ENCODE measurements at regions of chr21 and their contacts with region 1.

Region 1: DNA sequence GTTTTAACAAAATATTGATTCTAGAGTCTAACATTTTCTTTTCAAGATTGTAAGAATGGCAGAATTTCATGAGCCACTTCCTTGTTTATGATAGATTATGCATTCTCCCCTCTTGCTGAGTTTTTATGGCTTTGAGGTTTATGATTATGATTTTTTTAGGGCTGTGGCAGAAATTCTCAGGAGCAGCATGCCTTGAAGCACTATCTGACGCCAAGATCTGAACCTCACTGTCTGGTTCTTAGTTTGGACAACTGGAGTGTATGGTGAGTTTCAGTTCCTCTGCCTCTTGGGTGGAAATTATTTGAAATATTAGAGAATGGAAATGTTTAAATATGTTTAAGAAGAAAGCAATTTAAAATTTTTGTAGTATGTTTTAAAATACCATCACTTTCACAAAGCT is 10.2 kb downstream of the USP16 start:
- DNase-seq: no peak
- H3K4me3 ChIP-seq: no peak overlapping the region
- H3K27ac ChIP-seq: no peak overlapping the region
- H3K4me1 ChIP-seq: no peaks in the 10 kb centered on the region
- H3K27me3 ChIP-seq: no peaks in the 10 kb centered on the region
- CTCF ChIP-seq: no peak
- POLR2A ChIP-seq: no peak

Region 2: DNA sequence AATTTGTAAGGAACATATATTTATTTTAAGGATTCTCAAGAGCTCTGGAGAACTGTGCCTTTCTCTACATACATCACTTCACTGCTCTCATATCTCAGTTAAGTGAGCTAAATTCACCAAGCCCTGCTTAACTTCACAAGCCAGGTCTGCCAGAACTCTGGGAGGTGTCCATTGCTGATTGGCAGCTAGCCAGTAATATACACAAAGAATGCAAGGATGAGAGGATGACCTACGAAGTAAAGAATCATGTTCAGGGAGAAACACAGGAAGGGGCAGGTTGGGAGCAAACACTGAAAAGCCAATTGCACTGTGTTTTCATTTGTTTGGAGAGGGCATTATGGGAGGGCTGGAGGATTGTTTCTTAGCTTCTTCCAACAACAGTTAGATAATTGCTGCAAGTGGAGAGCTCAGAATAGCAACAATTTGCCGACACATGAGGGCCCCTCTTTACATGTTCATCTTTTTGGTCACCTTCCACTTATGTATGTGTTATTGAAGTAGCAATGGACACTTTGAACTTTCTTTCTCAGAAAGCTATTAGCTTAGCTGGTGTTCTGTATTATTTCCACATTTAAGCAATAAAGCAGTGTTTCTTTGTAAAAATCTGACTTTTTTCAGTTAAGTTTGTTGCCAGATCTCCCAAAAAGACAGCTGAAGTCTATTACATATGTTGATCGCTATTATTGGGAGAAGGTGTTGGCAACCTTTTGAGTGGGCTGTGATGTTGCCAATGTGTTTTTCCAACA is 296.8 kb before region 1 on chr21:
- intact Hi-C with region 1: no loop called
- DNase-seq: no peak
- H3K4me3 ChIP-seq: no peak overlapping the region
- H3K27ac ChIP-seq: no peak overlapping the region
- H3K4me1 ChIP-seq: no peaks in the 10 kb centered on the region
- H3K27me3 ChIP-seq: no peaks in the 10 kb centered on the region
- CTCF ChIP-seq: no peak
- POLR2A ChIP-seq: no peak

Region 3: GRCh38 chr21:29064850-29065481 is 30.3 kb after region 1 on chr21:
- intact Hi-C with region 1: loop called in 1 of 2 experiments (anchors 5 kb)
- DNase-seq: no peak
- H3K4me3 ChIP-seq: no peak overlapping the region
- H3K27ac ChIP-seq: no peak overlapping the region
- H3K4me1 ChIP-seq: peaks cover 0 to under 1% of the 10 kb centered on the region in 2 donors
- H3K27me3 ChIP-seq: no peaks in the 10 kb centered on the region
- CTCF ChIP-seq: no peak
- POLR2A ChIP-seq: no peak

Measured in adrenal gland (tissue), 19 donors.